Common myeloid progenitor, CD34-positive (primary cell): ENCODE measurements at regions of chr19 and their contacts with region 1.

Region 1: DNA sequence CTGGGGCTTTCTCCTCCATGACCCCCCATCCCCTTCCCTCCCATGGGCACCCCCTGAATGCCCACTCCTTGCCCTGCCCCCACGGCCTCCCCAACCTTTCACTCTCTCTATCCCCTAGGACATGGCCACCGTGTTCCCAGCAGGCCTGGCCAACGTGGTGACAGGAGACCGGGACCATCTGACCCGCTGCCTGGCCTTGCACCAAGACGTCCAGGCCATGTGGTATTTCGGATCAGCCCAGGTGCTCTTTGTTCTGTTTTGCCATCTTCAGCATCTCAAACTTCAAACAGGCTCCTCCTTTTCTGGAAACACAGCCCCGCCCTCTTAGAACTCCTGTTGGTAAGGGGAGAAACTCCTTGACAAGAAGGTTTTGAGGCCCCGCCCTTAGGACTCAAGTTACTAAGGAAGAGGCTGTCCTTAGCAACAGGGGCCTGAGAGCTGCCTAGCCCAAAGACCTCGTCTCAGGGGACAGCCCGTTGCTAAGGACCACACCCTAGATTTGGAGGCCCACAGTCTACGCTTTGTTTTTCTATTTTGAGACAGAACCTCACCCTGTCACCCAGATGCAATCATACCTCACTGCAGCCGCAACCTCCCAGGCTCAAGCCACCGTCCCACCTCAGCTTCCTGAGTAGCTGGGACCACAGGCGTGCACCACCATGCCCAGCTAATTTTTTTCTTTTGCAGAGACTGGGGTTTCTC is 5.1 kb upstream of the FLT3LG start:
- DNase-seq: peak; percentile 93 to 98 (median 96)
- H3K4me3 ChIP-seq: no peak overlapping the region
- H3K27ac ChIP-seq: peak overlapping the region; percentile 36 to 61
- H3K4me1 ChIP-seq: peaks cover 4 to 47% (median 44%) of the 10 kb centered on the region in 4 experiments
- H3K27me3 ChIP-seq: no peaks in the 10 kb centered on the region

Region 2: DNA sequence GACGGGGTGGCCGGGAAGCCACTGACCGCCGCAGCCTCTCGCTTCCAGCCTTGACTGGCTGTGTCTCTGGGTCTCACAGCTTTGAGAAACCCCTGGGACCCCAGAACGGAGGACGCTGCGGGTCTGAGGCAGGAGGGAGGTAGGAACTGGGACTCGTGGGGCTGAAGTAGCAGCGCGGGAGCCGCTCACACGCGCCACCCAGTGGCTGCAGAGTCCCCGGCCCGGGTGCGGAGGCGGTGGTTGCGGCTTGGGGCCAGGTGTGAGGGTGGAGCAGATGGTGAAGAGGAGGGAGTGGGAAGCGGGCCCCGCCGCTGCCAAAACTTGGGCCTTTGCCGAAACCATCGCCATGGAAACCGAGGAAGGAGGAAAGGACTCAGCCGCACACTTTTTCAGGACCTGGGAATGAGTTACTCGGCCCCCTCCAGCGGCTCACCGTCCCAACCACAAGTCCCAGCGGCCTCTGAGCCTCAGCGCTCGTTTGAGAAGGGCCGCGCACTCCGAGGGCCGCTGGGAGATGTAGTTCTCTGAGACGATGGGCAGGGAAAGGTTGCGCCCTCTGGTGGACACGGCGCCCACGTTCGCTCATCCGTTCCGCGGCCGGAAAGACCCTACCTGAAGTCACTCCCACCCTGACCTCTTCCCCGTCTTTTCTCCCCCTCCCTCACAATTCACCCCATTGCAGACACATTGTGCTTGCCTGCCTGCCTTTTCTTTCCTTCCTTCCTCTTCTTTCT is 25.4 kb before region 1 on chr19:
- CTCF ChIA-PET with region 1: interaction called, 20 read pairs
- POLR2A ChIA-PET with region 1: no interaction called
- DNase-seq: peak; percentile 94 to 95 (median 95)
- H3K4me3 ChIP-seq: peak overlapping the region; percentile 43 to 79 (median 69)
- H3K27ac ChIP-seq: no peak overlapping the region
- H3K4me1 ChIP-seq: peaks cover 0 to 22% (median 15%) of the 10 kb centered on the region in 4 experiments
- H3K27me3 ChIP-seq: peaks cover 2 to 40% (median 28%) of the 10 kb centered on the region in 5 experiments

Region 3: GRCh38 chr19:49451430-49452181 is 17.3 kb before region 1 on chr19 and contains the start of gene PIH1D1:
- CTCF ChIA-PET with region 1: interaction called, 23 read pairs
- POLR2A ChIA-PET with region 1: interaction called, 9 read pairs
- DNase-seq: peak; percentile 98 to 99 (median 99)
- H3K4me3 ChIP-seq: peak within 1 kb of the TSS; percentile 71 to 100 (median 89)
- H3K27ac ChIP-seq: peak within 1 kb of the TSS; percentile 96 to 99
- H3K4me1 ChIP-seq: peaks cover 0 to 29% (median 22%) of the 10 kb centered on the region in 4 experiments
- H3K27me3 ChIP-seq: no peaks in the 10 kb centered on the region

Region 4: DNA sequence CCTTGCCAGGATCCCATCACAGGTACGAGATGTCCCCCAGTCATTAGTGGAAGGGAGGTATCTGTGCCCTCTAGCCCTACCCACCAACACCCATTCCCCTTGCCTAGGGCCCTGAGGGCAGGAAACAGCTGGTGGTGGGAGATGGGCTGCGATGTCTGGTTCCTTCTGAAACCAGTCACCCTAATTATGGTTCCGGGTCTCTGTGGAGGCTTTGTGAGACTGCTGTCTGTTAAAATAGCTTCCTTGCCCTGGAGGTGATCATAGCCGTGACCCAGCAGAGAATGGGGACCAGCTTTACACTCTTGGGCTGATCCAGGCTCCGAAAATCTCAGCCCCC is 10.4 kb before region 1 on chr19:
- CTCF ChIA-PET with region 1: interaction called, 23 read pairs
- POLR2A ChIA-PET with region 1: interaction called, 9 read pairs
- DNase-seq: no peak
- H3K4me3 ChIP-seq: no peak overlapping the region
- H3K27ac ChIP-seq: no peak overlapping the region
- H3K4me1 ChIP-seq: peaks cover 0 to 11% (median 10%) of the 10 kb centered on the region in 4 experiments
- H3K27me3 ChIP-seq: no peaks in the 10 kb centered on the region

Region 5: GRCh38 chr19:49515767-49516166 is 46.9 kb after region 1 on chr19:
- CTCF ChIA-PET with region 1: no interaction called
- POLR2A ChIA-PET with region 1: no interaction called
- DNase-seq: peak in 2 of 3 donors; percentile 80 to 85
- H3K4me3 ChIP-seq: no peak overlapping the region
- H3K27ac ChIP-seq: no peak overlapping the region
- H3K4me1 ChIP-seq: peaks cover 0 to 62% (median 39%) of the 10 kb centered on the region in 4 experiments
- H3K27me3 ChIP-seq: no peaks in the 10 kb centered on the region